Activated CD4-positive, alpha-beta T cell treated with anti-CD3 and anti-CD28 coated beads for 36 hours (primary cell): ENCODE measurements at regions of chr19 and their contacts with region 1.

Region 1: GRCh38 chr19:11505032-11505503 is 571 bp downstream of the ZNF653 start:
- DNase-seq: peak; percentile 98
- ATAC-seq: peak; percentile 95
- H3K4me3 Mint-ChIP-seq: peak overlapping the region; percentile 83
- H3K27ac Mint-ChIP-seq: peak overlapping the region; percentile 87
- H3K4me1 Mint-ChIP-seq: peaks cover 12% of the 10 kb centered on the region
- H3K27me3 Mint-ChIP-seq: no peaks in the 10 kb centered on the region

Region 2: GRCh38 chr19:11197264-11198174 is 307.5 kb before region 1 on chr19 and contains the start of gene KANK2:
- CTCF ChIA-PET with region 1: no interaction called
- POLR2A ChIA-PET with region 1: no interaction called
- intact Hi-C with region 1: loop called in 1 of 2 experiments (anchors 1 kb)
- DNase-seq: peak; percentile 88
- ATAC-seq: peak; percentile 92
- H3K4me3 Mint-ChIP-seq: peak within 1 kb of the TSS; percentile 53
- H3K27ac Mint-ChIP-seq: no peak within 1 kb of the TSS
- H3K4me1 Mint-ChIP-seq: peaks cover 7% of the 10 kb centered on the region
- H3K27me3 Mint-ChIP-seq: peaks cover 11% of the 10 kb centered on the region
- total RNA-seq, gene KANK2: 0.91 to 1.2 TPM

Region 3: GRCh38 chr19:11380653-11381534 is 124.2 kb before region 1 on chr19:
- CTCF ChIA-PET with region 1: no interaction called
- POLR2A ChIA-PET with region 1: no interaction called
- intact Hi-C with region 1: loop called in 1 of 2 experiments (anchors 1 kb)
- DNase-seq: peak; percentile 97
- ATAC-seq: peak; percentile 86
- H3K4me3 Mint-ChIP-seq: peak overlapping the region; percentile 75
- H3K27ac Mint-ChIP-seq: peak overlapping the region; percentile 93
- H3K4me1 Mint-ChIP-seq: peaks cover 46% of the 10 kb centered on the region
- H3K27me3 Mint-ChIP-seq: peaks cover 14% of the 10 kb centered on the region

Region 4: GRCh38 chr19:11535792-11536595 is 30.9 kb after region 1 on chr19:
- CTCF ChIA-PET with region 1: no interaction called
- POLR2A ChIA-PET with region 1: no interaction called
- intact Hi-C with region 1: loop called in 1 of 2 experiments (anchors 2 kb)
- DNase-seq: peak; percentile 94
- ATAC-seq: peak; percentile 76
- H3K4me3 Mint-ChIP-seq: peak overlapping the region; percentile 2
- H3K27ac Mint-ChIP-seq: peak overlapping the region; percentile 51
- H3K4me1 Mint-ChIP-seq: peaks cover 17% of the 10 kb centered on the region
- H3K27me3 Mint-ChIP-seq: peaks cover 14% of the 10 kb centered on the region

Region 5: GRCh38 chr19:11597202-11598102 is 92.4 kb after region 1 on chr19 and contains the start of gene ZNF627:
- CTCF ChIA-PET with region 1: no interaction called
- POLR2A ChIA-PET with region 1: no interaction called
- intact Hi-C with region 1: loop called in 1 of 2 experiments (anchors 1 kb)
- DNase-seq: peak; percentile 99
- ATAC-seq: peak; percentile 100
- H3K4me3 Mint-ChIP-seq: peak within 1 kb of the TSS; percentile 97
- H3K27ac Mint-ChIP-seq: peak within 1 kb of the TSS; percentile 91
- H3K4me1 Mint-ChIP-seq: peaks cover 34% of the 10 kb centered on the region
- H3K27me3 Mint-ChIP-seq: no peaks in the 10 kb centered on the region
- total RNA-seq, gene ZNF627: 6.4 to 6.7 TPM

Region 6: DNA sequence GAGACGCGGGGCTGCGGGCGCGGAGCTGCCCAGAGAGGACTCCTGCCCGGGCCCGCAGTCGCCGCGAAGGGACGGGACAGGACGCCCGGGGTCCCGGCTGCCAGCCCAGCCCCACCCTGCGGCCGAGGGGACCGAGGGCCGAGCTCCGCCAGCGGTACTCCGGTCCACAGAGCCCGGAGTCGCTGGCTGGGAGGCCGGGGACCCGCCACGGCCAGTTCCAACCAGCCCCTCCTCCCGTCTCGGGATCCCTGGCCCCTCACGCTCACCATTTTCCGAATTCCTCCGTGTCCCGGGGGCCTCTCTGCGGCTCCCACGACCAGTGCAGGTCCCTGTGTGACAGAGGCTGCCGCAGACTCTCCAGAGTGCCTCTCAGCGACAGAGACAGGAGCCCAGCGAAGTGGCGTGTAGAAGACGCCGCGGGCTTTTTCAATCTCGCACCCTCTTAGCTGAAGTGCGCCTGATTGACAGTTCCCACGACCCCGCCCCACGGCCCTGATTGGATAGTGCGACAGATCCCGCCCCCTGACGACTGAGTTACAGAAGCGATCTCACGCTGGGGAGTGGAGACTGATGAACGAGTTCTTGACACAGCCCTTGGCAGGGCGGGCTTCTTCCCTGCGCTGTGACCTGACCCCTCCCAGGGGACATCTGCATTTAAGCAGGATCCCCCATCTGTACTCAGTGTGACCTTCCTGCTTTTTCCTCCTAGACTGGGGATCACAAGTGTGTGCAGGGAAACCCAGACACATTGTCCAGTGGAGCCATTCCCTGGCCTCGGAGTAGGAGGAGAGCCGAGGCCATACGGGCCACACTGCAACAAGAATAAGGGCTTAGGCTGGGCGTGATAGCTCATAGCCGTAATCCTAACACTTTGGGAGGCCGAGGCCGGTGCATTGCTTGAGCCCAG is 189.7 kb after region 1 on chr19:
- CTCF ChIA-PET with region 1: no interaction called
- POLR2A ChIA-PET with region 1: no interaction called
- intact Hi-C with region 1: no loop called
- DNase-seq: peak; percentile 96
- ATAC-seq: peak; percentile 99
- H3K4me3 Mint-ChIP-seq: peak overlapping the region; percentile 84
- H3K27ac Mint-ChIP-seq: peak overlapping the region; percentile 84
- H3K4me1 Mint-ChIP-seq: peaks cover 10% of the 10 kb centered on the region
- H3K27me3 Mint-ChIP-seq: peaks cover 28% of the 10 kb centered on the region

Region 7: DNA sequence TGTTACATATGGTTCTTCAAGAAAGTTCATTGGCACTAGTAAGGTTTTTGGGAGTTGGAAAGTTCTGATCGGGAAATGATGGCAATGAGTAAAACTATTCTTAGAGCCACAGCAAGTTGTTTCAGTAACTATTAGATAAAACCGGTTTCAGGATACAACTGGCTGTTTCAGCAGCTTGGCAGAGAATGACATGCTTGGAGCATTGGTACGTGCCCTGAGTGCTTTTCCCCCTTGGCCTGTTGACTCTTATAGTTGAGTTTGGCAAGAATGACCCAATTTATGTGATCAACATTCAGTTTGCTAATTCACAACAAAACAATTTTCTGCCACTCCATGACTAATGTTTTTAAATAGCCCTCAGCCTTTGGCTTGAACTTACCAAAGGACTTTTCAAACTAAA is 282.5 kb after region 1 on chr19:
- CTCF ChIA-PET with region 1: no interaction called
- POLR2A ChIA-PET with region 1: no interaction called
- intact Hi-C with region 1: no loop called
- DNase-seq: no peak
- ATAC-seq: no peak
- H3K4me3 Mint-ChIP-seq: no peak overlapping the region
- H3K27ac Mint-ChIP-seq: no peak overlapping the region
- H3K4me1 Mint-ChIP-seq: no peaks in the 10 kb centered on the region
- H3K27me3 Mint-ChIP-seq: no peaks in the 10 kb centered on the region